ENCODE measurements at regions of chr11 and their contacts with region 1.

Region 1: DNA sequence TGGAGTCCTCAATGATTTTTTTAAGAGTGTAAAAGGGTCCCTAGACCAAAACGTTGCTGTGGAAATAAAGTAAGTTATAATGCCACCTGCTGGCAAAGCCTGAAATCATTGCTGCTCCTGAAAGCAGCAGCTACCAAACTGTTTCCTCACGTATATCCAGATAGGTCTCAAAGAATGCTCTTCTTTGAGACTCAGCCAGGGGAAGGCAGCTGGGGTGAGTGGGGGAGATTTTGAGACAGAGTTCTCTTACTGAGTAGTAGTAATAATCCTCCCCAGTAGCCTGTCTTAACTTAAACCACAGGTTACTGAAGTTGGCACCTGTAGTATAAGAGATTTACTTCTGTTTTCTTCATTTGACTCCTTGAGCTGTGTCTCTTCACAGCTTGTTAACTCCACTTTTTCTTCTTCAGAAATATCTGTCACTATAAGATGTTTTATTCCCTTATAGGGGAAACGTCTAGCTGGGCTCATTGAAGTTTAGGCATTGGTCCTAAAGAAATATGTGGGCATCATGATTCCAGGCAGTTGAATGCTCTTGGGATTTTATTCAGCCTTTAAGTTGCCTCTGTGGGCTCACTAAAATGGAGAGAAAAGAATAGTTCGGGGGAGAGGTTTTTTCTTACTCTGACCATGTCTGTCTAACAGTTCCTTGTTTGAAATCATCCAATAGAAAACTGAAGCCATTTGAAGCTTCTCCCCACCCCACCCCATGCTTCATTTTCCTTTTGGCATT is 77.9 kb downstream of the BTBD10 start:
- DNase-seq: peak; percentile 39
- H3K4me3 ChIP-seq: no peak overlapping the region; a peak in 1 of 4 replicates
- H3K27ac ChIP-seq: peak overlapping the region; percentile 2 to 34; a peak in 2 of 4 replicates
- H3K4me1 ChIP-seq: no peaks in the 10 kb centered on the region; a peak in 1 of 4 replicates
- H3K27me3 ChIP-seq: no peaks in the 10 kb centered on the region
- CTCF ChIP-seq: peak; percentile 85
- EP300 ChIP-seq: no peak
- RAD21 ChIP-seq: peak; percentile 70

Region 2: DNA sequence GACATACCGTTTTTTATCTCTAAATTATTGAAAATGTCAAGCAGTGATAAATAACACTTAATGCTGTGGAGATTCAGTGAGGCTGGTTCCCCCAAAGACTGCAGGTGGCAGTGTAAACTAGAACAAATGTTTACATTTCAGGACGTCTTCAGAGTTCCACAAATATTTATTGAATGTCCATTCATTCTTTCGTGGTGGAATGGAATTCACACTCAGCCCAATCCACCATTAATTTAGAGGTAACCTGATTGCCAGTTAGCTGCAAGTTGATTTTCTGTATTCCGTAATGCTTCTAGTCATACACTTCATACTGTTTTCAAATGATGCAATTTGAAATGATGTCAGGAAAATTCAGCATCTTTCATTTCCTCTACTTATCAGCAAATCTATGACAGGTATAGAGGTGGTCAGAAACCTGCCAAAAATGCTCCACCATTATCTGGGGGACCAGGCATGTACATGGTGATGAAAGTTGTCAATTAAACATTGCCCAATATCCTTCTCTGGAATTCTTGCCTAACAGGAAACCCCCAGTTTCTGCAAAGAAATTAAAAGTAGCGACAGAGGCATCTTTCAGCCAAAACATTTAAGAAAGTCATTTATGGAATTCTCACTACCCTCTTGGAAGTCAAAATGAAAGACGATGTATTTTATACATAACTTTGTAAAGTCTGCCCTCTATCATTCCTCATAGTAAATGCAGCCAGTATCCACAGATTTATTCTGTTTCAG is 201.8 kb before region 1 on chr11:
- CTCF ChIA-PET with region 1: interaction called, 11 read pairs
- POLR2A ChIA-PET with region 1: no interaction called
- DNase-seq: peak; percentile 26
- H3K4me3 ChIP-seq: peak overlapping the region; percentile 40 to 52; a peak in 3 of 4 replicates
- H3K27ac ChIP-seq: no peak overlapping the region
- H3K4me1 ChIP-seq: no peaks in the 10 kb centered on the region; a peak in 1 of 4 replicates
- H3K27me3 ChIP-seq: no peaks in the 10 kb centered on the region
- CTCF ChIP-seq: peak; percentile 63
- EP300 ChIP-seq: no peak
- RAD21 ChIP-seq: peak; percentile 73

Region 3: DNA sequence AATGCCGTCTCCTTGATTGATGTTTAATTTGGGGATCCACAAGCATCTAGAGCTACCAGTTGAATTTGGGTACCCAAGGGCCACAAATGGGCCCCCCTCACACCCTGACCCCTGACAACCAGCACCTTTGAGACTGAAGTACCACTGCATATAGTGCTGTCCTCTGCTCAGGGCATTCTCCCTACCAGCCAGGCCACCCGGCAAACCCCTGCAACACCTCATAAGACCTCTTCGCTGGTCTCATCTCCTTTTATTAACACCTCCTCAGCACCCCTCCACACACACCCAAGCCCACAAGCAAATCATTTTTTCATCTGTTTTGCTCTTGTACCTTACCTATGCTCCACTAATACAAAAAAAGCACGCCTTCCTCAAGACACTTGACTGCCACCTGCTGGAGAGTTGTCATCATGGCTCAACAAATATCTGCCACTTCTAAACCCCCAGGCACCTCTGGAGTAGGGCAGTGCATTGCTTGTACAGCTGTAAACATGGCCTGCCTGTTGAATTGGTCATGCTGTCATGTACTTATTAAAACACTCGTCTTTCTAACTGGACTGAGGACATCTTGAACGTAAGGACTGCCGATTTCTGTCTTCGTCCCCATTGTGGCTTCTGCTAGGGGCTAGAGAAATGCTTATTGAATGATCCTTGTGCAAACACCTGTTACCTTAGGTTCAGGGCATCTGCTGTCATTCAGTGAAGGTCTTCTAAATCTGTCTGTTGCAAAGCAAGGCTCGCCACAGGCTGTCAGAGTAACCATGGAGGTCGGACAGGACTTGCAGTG is 41.0 kb before region 1 on chr11:
- CTCF ChIA-PET with region 1: interaction called, 20 read pairs
- POLR2A ChIA-PET with region 1: no interaction called
- DNase-seq: peak; percentile 73
- H3K4me3 ChIP-seq: no peak overlapping the region; a peak in 1 of 4 replicates
- H3K27ac ChIP-seq: no peak overlapping the region
- H3K4me1 ChIP-seq: peaks cover 3 to 5% of the 10 kb centered on the region in 2 experiments; a peak in 3 of 4 replicates
- H3K27me3 ChIP-seq: no peaks in the 10 kb centered on the region
- CTCF ChIP-seq: peak; percentile 85
- EP300 ChIP-seq: no peak
- RAD21 ChIP-seq: peak; percentile 90

Region 4: DNA sequence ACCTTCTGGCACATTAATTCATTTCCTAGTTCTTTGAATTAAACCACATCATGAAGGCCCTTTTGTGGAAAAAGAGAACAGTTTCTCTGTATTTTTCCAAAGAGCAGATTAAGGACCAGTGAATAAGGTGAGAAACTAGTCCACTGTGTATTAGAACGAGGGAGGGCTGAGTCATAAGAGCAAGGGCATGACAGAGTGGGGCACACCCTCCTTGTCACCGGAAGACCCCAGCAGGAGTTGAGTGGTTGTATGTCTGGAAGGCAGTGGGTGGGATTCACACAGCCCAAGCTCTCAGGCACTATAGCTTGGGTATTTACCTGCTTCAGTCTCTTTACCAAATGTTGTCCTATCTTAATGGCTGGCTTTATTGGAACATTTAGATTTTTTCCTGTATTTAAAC is 20.7 kb before region 1 on chr11:
- CTCF ChIA-PET with region 1: interaction called, 10 read pairs
- POLR2A ChIA-PET with region 1: no interaction called
- DNase-seq: no peak
- H3K4me3 ChIP-seq: no peak overlapping the region
- H3K27ac ChIP-seq: no peak overlapping the region
- H3K4me1 ChIP-seq: peaks cover 0 to 8% of the 10 kb centered on the region in 2 experiments; a peak in 1 of 4 replicates
- H3K27me3 ChIP-seq: no peaks in the 10 kb centered on the region
- CTCF ChIP-seq: no peak
- EP300 ChIP-seq: no peak
- RAD21 ChIP-seq: no peak

Region 5: GRCh38 chr11:13405220-13405619 is 20.1 kb after region 1 on chr11:
- CTCF ChIA-PET with region 1: interaction called, 22 read pairs
- POLR2A ChIA-PET with region 1: no interaction called
- DNase-seq: no peak
- H3K4me3 ChIP-seq: no peak overlapping the region
- H3K27ac ChIP-seq: no peak overlapping the region
- H3K4me1 ChIP-seq: peaks cover 0 to 6% of the 10 kb centered on the region in 2 experiments; a peak in 2 of 4 replicates
- H3K27me3 ChIP-seq: no peaks in the 10 kb centered on the region
- CTCF ChIP-seq: no peak
- EP300 ChIP-seq: no peak
- RAD21 ChIP-seq: no peak

Measured in SK-N-SH (cell line).